BJ (cell line): ENCODE measurements at regions of chr11 and their contacts with region 1.

Region 1: DNA sequence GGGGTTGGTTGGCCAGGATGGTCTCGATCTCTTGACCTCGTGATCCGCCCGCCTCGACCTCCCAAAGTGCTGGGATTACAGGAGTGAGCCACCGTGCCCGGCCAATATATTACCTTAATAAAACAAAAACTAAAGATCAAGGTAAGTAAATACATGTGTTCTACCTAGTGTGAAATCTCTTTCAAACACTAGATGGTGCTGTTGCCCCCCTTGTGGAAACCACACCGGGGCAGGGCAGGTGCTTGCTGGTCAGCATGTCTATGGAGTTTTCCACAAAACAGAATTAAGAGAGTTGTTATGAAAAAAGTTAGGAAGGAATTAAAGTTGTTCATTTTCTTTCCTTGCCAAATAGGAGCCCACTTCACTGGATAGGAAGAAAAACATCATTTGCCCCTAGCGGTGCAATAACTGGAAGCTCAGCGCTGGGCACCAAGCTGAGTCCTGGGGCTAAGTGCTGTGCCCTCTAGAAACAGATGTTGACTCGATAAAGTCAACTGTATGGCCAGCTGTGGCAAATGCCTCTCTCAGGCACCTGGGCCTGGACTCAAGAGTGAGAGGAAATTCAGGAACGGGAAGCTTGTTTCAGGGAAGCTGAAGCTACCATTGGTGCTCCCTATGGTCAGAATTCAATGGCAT is 6.3 kb upstream of the KCNJ5 start:
- DNase-seq: peak; percentile 14
- H3K4me3 ChIP-seq: no peak overlapping the region
- H3K27me3 ChIP-seq: peaks cover 26% of the 10 kb centered on the region
- CTCF ChIP-seq: peak; percentile 77

Region 2: GRCh38 chr11:128874427-128874826 is 10.4 kb before region 1 on chr11:
- CTCF ChIA-PET with region 1: interaction called, 46 read pairs
- POLR2A ChIA-PET with region 1: no interaction called
- DNase-seq: no peak
- H3K4me3 ChIP-seq: no peak overlapping the region
- H3K27me3 ChIP-seq: peaks cover 8% of the 10 kb centered on the region
- CTCF ChIP-seq: no peak

Region 3: GRCh38 chr11:128917144-128917724 is 32.4 kb after region 1 on chr11:
- CTCF ChIA-PET with region 1: interaction called, 14 read pairs
- POLR2A ChIA-PET with region 1: no interaction called
- DNase-seq: no peak
- H3K4me3 ChIP-seq: no peak overlapping the region
- H3K27me3 ChIP-seq: peaks cover 4% of the 10 kb centered on the region
- CTCF ChIP-seq: no peak

Region 4: DNA sequence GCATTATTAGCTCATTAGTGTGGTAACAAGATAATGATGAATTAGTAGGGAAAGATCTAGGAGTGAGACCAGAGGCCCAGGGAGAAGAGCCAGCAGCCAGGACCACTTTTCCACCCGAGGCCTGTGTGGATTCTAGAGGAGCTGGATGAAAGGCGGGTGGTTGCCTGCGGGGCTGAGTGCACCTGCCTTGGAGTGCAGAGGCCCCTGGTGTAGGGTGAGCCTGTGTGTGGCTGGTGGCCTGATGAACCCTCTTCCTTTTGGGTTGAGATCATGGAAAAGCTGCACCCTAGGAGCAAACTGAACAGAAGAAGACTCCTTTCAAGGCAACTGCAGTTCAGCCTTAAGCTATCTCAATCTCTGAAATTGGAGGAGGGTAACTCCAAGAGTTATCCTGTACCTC is 63.8 kb after region 1 on chr11:
- CTCF ChIA-PET with region 1: interaction called, 253 read pairs
- POLR2A ChIA-PET with region 1: no interaction called
- DNase-seq: no peak
- H3K4me3 ChIP-seq: no peak overlapping the region
- H3K27me3 ChIP-seq: 0 out of 2 replicates have a peak, but pooled peaks cover 3% of the 10 kb centered on the region
- CTCF ChIP-seq: 0 out of 2 replicates have a peak, but pooled peaks have one; percentile 7

Region 5: GRCh38 chr11:128965485-128965884 is 80.7 kb after region 1 on chr11:
- CTCF ChIA-PET with region 1: interaction called, 253 read pairs
- POLR2A ChIA-PET with region 1: no interaction called
- DNase-seq: no peak
- H3K4me3 ChIP-seq: no peak overlapping the region
- H3K27me3 ChIP-seq: no peaks in the 10 kb centered on the region
- CTCF ChIP-seq: no peak